ENCODE measurements at regions of chr20 and their contacts with region 1.

Region 1: GRCh38 chr20:64038565-64039292 is 2.7 kb downstream of the C20orf204 start:
- DNase-seq: peak; percentile 87
- CTCF ChIP-seq: peak; percentile 82

Region 2: DNA sequence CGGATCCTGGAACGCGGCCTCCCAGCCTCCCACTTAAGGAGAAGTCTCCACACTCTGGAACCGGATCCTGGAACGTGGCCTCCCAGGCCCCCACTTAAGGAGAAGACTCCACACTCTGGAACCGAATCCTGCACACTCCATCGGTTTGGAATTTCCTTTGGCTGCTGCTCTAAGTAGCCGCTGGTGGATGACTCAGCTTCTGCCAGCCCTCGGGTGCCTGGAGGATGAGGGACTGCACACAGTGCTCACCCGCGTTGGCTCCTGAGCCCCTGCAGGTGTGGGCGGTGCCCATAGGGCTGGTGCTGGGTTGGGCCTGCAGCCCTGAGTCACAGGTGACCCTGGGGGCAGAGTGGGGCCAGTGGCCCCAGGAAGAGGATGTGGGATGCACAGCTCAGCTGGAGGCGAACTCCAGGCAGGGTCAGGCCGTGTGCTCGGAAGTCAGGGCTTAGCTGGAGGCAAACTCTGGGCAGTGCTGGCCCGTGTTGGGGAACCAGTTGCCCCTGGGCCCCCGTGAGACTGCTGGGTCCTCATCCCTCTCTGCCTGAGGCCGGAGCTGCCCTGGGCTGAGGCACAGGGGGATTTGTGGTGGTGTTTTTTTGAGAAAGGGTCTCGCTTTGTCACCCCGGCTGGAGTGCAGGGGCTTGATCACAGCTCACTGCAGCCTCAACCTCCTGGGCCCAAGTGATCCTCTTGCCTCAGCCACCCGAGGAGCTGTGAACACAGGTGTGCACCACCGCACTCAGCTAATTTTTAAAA is 356.2 kb before region 1 on chr20:
- CTCF ChIA-PET with region 1: no interaction called
- POLR2A ChIA-PET with region 1: no interaction called
- DNase-seq: no peak
- CTCF ChIP-seq: no peak

Region 3: GRCh38 chr20:63696306-63696627 is 342.5 kb before region 1 on chr20:
- CTCF ChIA-PET with region 1: no interaction called
- POLR2A ChIA-PET with region 1: no interaction called
- DNase-seq: no peak
- CTCF ChIP-seq: no peak

Region 4: DNA sequence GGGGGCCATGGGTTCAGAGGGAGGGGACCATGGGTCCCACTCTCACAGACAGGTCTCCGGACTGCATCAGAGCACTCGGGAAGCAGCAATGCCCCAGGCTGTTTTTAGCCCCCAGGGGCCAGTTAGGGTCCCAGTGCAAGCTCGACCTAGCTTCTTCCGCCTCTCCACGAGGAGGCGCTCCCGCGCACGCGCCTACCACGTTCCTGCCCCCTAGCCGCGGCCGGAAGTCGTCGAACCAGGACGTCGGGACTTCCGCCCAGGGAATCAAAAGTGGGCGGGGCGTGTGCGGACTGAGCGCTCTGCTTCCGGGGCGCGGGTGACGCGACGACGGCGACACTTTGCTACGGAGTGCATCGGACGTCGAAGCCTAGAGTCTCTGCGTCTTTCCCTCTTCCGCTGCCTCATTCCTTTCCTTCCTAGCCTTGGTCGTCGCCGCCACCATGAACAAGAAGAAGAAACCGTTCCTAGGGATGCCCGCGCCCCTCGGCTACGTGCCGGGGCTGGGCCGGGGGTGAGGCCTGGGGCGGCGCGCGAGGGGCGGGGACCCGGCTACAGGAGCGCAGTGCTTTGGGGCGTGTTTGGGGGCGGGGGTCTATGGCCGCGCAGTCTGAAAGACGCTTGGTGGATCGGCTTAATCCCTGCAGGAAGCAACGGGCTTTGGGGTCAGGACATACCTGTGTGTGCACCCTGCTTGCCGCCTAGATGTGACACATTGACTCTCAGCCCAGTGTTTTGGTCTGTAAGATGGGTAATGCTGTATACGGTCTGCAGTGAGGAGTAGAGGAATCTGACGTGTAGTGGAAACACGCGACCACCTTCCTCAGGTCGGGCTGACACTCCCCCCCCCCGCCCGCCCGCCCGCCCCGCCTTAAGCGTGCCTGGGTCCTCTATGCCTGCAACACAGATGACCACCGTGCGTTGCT is 57.7 kb before region 1 on chr20 and contains the start of gene PRPF6:
- CTCF ChIA-PET with region 1: interaction called, 116 read pairs
- POLR2A ChIA-PET with region 1: interaction called, 10 read pairs
- DNase-seq: peak; percentile 98
- CTCF ChIP-seq: peak; percentile 85

Region 5: GRCh38 chr20:64010711-64011237 is 28.0 kb before region 1 on chr20:
- CTCF ChIA-PET with region 1: interaction called, 21 read pairs
- POLR2A ChIA-PET with region 1: interaction called, 6 read pairs
- DNase-seq: no peak
- CTCF ChIP-seq: no peak

Region 6: DNA sequence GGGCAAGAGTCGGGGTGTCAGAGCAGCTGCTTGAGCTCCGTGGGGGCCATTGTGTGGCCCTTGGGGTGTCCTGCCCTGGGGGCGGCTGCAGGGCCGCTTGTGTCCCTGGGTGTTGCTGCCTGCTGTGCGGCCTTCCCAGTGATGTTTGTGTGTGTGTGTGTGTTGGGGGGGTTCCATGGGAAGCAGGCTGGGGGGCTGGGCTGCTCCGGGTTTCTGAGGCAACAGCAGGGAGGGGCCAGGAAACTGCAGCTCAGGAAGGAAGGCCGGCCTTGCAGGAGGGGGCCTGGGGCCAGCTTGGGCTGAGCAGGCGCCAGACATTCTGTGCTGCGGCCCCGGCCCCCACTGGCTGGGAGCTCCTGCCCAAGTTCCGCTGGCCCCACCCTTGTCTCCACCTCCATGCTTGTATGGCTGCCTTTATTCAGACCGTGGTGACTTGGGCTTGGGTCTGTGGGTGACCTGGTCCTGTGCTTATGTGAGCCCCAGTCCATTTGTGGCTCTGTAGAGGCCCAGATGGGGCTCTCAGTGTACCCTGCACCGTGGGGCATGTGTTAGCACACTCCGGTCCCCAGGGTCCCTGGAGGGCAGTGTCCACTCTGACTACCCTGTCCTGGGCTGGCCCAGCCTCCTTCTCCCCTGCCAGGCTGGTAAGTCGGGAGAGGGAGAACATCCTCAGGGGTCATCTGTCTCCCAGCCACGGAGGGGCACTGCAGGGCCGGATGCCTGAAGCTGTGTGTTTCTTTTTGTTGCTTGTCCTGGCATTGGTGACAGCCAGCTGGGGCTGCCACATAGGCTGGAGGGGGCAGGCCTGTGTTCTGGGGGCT is 15.3 kb after region 1 on chr20:
- CTCF ChIA-PET with region 1: interaction called, 69 read pairs
- POLR2A ChIA-PET with region 1: interaction called, 3 read pairs
- DNase-seq: peak; percentile 62
- CTCF ChIP-seq: peak; percentile 41

Measured in GM10248 (cell line).